ENCODE measurements at regions of chr9 and their contacts with region 1.

Region 1: GRCh38 chr9:4984621-4985385 is at the start of gene JAK2:
- DNase-seq: peak; percentile 97
- H3K4me3 ChIP-seq: peak within 1 kb of the TSS; percentile 80 to 90 (median 86)
- H3K27ac ChIP-seq: peak within 1 kb of the TSS; percentile 96 to 99 (median 98)
- H3K4me1 ChIP-seq: peaks cover 24 to 48% (median 45%) of the 10 kb centered on the region in 4 donors
- H3K27me3 ChIP-seq: no peaks in the 10 kb centered on the region
- CTCF ChIP-seq: peak; percentile 34 to 56 (median 35)
- EP300 ChIP-seq: no peak
- POLR2A ChIP-seq: peak; percentile 57
- total RNA-seq, gene JAK2: 27.0 to 47.8 (median 35.1) TPM

Region 2: GRCh38 chr9:4662108-4662988 is 322.5 kb before region 1 on chr9 and contains the start of gene PLPP6:
- intact Hi-C with region 1: loop called (anchors 10 kb)
- DNase-seq: peak; percentile 94
- H3K4me3 ChIP-seq: peak within 1 kb of the TSS; percentile 69 to 97 (median 92)
- H3K27ac ChIP-seq: peak within 1 kb of the TSS; percentile 80 to 91 (median 86)
- H3K4me1 ChIP-seq: peaks cover 20 to 54% (median 50%) of the 10 kb centered on the region in 4 donors
- H3K27me3 ChIP-seq: no peaks in the 10 kb centered on the region
- CTCF ChIP-seq: peak; percentile 65 to 74 (median 69)
- EP300 ChIP-seq: no peak
- POLR2A ChIP-seq: peak; percentile 38
- total RNA-seq, gene PLPP6: 3.8 to 6.3 (median 6.2) TPM

Region 3: GRCh38 chr9:4792572-4793458 is 192.0 kb before region 1 on chr9 and contains the start of gene RCL1:
- intact Hi-C with region 1: loop called (anchors 10 kb)
- DNase-seq: peak; percentile 97
- H3K4me3 ChIP-seq: peak within 1 kb of the TSS; percentile 71 to 77 (median 73)
- H3K27ac ChIP-seq: peak within 1 kb of the TSS; percentile 73 to 85 (median 78)
- H3K4me1 ChIP-seq: peaks cover 13 to 31% (median 25%) of the 10 kb centered on the region in 4 donors
- H3K27me3 ChIP-seq: no peaks in the 10 kb centered on the region
- CTCF ChIP-seq: no peak
- EP300 ChIP-seq: no peak
- POLR2A ChIP-seq: peak; percentile 56
- total RNA-seq, gene RCL1: 13.4 to 19.1 (median 14.9) TPM

Region 4: GRCh38 chr9:5073701-5074100 is 88.9 kb after region 1 on chr9:
- intact Hi-C with region 1: loop called (anchors 10 kb)
- DNase-seq: no peak
- H3K4me3 ChIP-seq: no peak overlapping the region
- H3K27ac ChIP-seq: no peak overlapping the region
- H3K4me1 ChIP-seq: no peaks in the 10 kb centered on the region
- H3K27me3 ChIP-seq: no peaks in the 10 kb centered on the region
- CTCF ChIP-seq: no peak
- EP300 ChIP-seq: no peak
- POLR2A ChIP-seq: no peak